ENCODE measurements at regions of chr6 and their contacts with region 1.

Region 1: GRCh38 chr6:146357578-146358430 is 185.8 kb upstream of the RAB32 start:
- DNase-seq: peak; percentile 91
- H3K4me3 ChIP-seq: peak overlapping the region in 1 of 3 experiments; percentile 28
- H3K27ac ChIP-seq: peak overlapping the region; percentile 99
- H3K4me1 ChIP-seq: peaks cover 54% of the 10 kb centered on the region
- H3K27me3 ChIP-seq: no peaks in the 10 kb centered on the region
- CTCF ChIP-seq: no peak
- POLR2A ChIP-seq: no peak

Region 2: GRCh38 chr6:145734486-145735355 is 623.1 kb before region 1 on chr6:
- CTCF ChIA-PET with region 1: no interaction called
- POLR2A ChIA-PET with region 1: no interaction called
- dilution Hi-C with region 1: no loop called
- intact Hi-C with region 1: loop called (anchors 1 kb)
- DNase-seq: peak; percentile 89
- H3K4me3 ChIP-seq: peak overlapping the region; percentile 51 to 60 (median 56)
- H3K27ac ChIP-seq: peak overlapping the region; percentile 87
- H3K4me1 ChIP-seq: peaks cover 18% of the 10 kb centered on the region
- H3K27me3 ChIP-seq: no peaks in the 10 kb centered on the region
- CTCF ChIP-seq: no peak
- POLR2A ChIP-seq: peak; percentile 91

Region 3: GRCh38 chr6:145963216-145964068 is 394.4 kb before region 1 on chr6:
- CTCF ChIA-PET with region 1: no interaction called
- POLR2A ChIA-PET with region 1: no interaction called
- dilution Hi-C with region 1: no loop called
- intact Hi-C with region 1: loop called (anchors 1 kb)
- DNase-seq: peak; percentile 68
- H3K4me3 ChIP-seq: peak overlapping the region; percentile 73 to 78 (median 77)
- H3K27ac ChIP-seq: peak overlapping the region; percentile 66
- H3K4me1 ChIP-seq: peaks cover 11% of the 10 kb centered on the region
- H3K27me3 ChIP-seq: no peaks in the 10 kb centered on the region
- CTCF ChIP-seq: no peak
- POLR2A ChIP-seq: no peak

Region 4: DNA sequence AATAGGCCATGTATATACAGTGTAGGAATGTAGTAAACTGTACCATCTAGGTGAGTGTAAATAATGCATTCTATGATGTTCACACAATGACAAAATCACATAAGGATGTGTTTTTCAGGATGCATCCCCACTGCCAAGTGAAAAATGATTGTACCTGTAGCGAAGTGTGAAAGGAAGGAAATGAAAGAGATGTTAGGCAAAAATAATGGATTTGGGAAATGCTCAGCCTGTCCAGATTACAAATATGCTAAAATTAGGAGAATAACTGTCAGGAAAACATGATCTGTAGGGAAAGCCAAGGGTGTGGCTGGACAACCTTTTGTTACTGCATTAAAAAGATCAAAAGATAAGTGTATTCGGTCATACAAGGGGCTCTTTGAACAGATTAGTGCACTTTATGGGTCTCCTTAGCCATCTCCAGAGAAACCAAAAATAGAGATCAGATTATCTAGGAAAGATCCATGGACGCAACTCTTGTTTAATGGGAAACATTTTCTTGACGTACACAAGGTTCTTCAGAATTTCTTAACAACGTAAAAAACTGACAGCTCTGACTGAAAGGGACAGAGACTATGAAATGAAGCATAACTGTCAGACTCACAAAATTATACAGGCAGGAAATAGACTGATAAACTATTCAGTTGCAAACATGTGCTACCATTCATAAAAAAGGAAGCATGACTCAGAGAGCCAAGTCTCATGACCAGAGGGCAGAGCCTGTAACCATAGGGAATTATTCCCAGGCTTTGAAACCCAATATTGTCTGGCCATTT is 67.8 kb before region 1 on chr6:
- CTCF ChIA-PET with region 1: no interaction called
- POLR2A ChIA-PET with region 1: no interaction called
- dilution Hi-C with region 1: no loop called
- intact Hi-C with region 1: loop called (anchors 1 kb)
- DNase-seq: peak; percentile 79
- H3K4me3 ChIP-seq: no peak overlapping the region
- H3K27ac ChIP-seq: peak overlapping the region; percentile 64
- H3K4me1 ChIP-seq: peaks cover 15% of the 10 kb centered on the region
- H3K27me3 ChIP-seq: no peaks in the 10 kb centered on the region
- CTCF ChIP-seq: no peak
- POLR2A ChIP-seq: no peak

Region 5: GRCh38 chr6:146770965-146771735 is 413.3 kb after region 1 on chr6:
- CTCF ChIA-PET with region 1: no interaction called
- POLR2A ChIA-PET with region 1: no interaction called
- dilution Hi-C with region 1: no loop called
- intact Hi-C with region 1: loop called (anchors 5 kb)
- DNase-seq: peak; percentile 70
- H3K4me3 ChIP-seq: no peak overlapping the region
- H3K27ac ChIP-seq: peak overlapping the region; percentile 33
- H3K4me1 ChIP-seq: peaks cover 7% of the 10 kb centered on the region
- H3K27me3 ChIP-seq: no peaks in the 10 kb centered on the region
- CTCF ChIP-seq: no peak
- POLR2A ChIP-seq: peak; percentile 40

Region 6: GRCh38 chr6:147868427-147869190 is 1510.8 kb after region 1 on chr6:
- CTCF ChIA-PET with region 1: no interaction called
- POLR2A ChIA-PET with region 1: no interaction called
- dilution Hi-C with region 1: no loop called
- intact Hi-C with region 1: loop called (anchors 5 kb)
- DNase-seq: peak; percentile 80
- H3K4me3 ChIP-seq: peak overlapping the region in 1 of 3 experiments; percentile 32
- H3K27ac ChIP-seq: peak overlapping the region; percentile 90
- H3K4me1 ChIP-seq: peaks cover 34% of the 10 kb centered on the region
- H3K27me3 ChIP-seq: no peaks in the 10 kb centered on the region
- CTCF ChIP-seq: no peak
- POLR2A ChIP-seq: no peak